ENCODE measurements at regions of chr2 and their contacts with region 1.

Region 1: GRCh38 chr2:156341452-156342253 is 9.1 kb upstream of the NR4A2 start:
- DNase-seq: peak; percentile 98

Region 2: DNA sequence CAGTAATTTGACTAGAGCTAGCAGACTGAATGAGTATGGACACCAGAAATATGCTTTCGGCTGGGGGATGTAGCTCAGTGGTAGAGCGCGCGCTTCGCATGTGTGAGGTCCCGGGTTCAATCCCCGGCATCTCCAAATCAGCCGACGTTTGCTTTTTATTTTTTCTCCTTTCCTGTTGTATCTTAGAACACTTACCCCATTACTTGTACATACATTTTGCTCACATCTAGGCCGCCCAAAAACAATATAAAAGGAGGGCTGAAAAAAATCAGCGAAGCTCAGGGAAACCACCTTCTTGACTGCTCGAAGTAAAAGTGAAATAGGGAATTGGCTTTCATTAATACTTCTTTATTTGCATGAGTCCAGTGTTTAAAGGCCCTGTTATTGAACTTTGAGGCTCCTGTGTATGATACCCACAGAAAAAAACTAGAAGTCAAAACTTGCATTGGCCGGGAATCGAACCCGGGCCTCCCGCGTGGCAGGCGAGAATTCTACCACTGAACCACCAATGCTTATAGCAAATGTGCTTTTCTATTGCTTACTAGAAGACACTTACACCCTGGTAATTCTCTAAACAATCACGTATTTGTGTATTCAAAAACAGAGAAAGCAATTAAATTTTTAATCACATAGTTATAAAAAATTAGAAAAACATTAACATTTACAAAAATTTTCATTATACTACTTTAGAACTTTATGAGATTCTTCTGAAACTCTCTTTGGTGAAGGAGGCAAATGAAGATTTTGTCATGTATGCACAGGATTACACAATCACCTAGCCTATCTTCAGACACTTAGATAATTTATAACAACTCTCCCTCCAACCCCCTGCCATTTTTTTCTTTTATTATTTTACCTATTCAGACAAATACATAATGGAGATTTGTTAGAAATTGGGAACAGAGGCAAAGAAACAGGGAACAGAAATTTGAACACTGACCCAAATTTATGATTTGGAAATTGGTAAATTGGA is 59.3 kb after region 1 on chr2:
- intact Hi-C with region 1: loop called in 1 of 2 experiments (anchors 10 kb)
- DNase-seq: peak; percentile 91

Measured in posterior vena cava (tissue), 2 donors.